ENCODE measurements at regions of chr1 and their contacts with region 1.

Region 1: DNA sequence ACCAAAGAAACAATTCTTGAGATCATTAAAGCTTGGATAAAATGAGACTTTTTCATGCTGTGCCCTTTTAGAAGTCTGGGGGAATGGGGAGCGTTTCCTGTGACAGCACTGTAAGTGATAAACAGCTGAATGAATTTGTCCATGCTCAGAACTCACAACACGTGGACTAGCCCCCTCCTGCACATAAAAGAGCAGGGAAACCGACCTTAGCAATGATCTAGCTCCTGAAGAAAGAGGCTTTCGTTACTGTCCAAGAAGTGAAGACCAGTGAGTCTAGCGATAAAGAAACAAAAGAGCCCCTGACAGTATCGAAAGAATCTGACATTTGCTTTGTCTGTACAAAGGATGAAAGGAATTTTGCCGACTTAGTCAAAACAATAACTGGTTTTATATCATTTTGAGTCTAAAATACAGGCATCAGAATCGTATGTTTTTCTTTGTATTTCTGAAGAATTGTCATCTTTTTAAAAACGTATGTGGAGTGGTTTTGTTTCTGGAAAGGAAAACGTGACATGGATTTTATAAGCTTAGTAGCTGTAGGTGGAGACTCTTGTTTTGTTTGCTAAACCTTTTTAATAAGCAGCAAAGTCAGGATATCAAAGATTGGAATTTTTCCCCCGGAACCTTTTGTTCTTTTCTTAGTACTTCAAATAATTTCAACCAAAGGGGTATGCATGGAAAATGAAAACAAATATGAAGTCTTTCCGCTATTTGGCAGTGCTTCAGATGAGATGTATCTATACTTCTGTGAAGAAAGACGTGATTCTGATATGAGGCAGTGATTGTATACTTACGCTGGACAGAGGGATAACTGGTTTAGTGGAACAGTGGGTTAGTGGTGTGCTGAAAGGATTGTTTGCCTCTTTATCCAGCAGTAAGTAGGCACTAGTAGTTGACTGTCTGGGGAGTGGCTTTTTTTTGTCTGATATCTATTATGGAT is 61.0 kb downstream of the MAST2 start:
- DNase-seq: no peak
- ATAC-seq: no peak
- H3K4me3 ChIP-seq: no peak overlapping the region
- H3K27ac ChIP-seq: peak overlapping the region; percentile 62
- H3K4me1 ChIP-seq: peaks cover 36% of the 10 kb centered on the region
- H3K27me3 ChIP-seq: no peaks in the 10 kb centered on the region
- CTCF ChIP-seq: no peak

Region 2: GRCh38 chr1:45686317-45687013 is 178.0 kb before region 1 on chr1 and contains the start of gene GPBP1L1:
- CTCF ChIA-PET with region 1: no interaction called
- POLR2A ChIA-PET with region 1: no interaction called
- in situ Hi-C with region 1: loop called (anchors 25 kb)
- intact Hi-C with region 1: no loop called
- DNase-seq: peak; percentile 91
- ATAC-seq: peak; percentile 87
- H3K4me3 ChIP-seq: peak within 1 kb of the TSS; percentile 99 to 100
- H3K27ac ChIP-seq: peak within 1 kb of the TSS; percentile 100
- H3K4me1 ChIP-seq: peaks cover 36% of the 10 kb centered on the region
- H3K27me3 ChIP-seq: no peaks in the 10 kb centered on the region
- CTCF ChIP-seq: no peak
- total RNA-seq, gene GPBP1L1: 130 TPM